Heart left ventricle (tissue), 16 donors: ENCODE measurements at regions of chr2 and their contacts with region 1.

Region 1: GRCh38 chr2:231674587-231675338 is 33.6 kb upstream of the PTMA start:
- DNase-seq: peak; percentile 71 to 86 (median 76)
- ATAC-seq: peak in 3 of 4 donors; percentile 41 to 58 (median 57)
- H3K4me3 ChIP-seq: no peak overlapping the region
- H3K27ac ChIP-seq: peak overlapping the region; percentile 70 to 98 (median 88)
- H3K4me1 ChIP-seq: peaks cover 5 to 58% (median 46%) of the 10 kb centered on the region in 12 donors
- H3K27me3 ChIP-seq: no peaks in the 10 kb centered on the region
- CTCF ChIP-seq: peak; percentile 75 to 95 (median 86)
- POLR2A ChIP-seq: no peak

Region 2: DNA sequence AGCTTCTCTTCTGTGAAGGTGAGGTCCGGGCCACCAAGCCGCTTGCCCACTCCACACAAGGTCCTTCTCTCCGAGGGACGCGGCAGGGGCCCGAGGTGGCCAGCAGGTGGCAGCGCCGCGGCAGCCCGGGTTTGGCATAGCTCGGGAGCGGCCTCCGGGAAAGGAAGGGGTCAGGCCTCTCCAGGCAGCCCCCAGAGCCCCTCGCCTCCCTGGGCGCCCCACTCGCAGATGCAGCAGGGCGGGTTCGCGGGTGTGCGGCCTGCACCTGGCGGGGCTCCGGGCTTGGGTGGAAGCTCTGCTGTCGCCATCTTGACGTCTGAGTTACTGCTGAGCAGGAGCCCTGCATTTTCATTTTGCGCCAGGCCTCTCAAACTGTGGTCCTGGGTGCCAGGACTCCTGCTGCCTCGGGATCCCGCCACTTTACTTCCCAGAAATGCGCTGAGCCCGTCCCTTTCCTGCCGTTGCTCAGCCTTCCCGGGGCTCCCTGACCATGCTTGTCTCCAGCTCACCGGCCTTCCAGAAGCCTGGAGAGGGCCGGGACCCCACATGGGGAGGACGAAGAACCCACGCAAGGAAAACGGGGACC is 191.9 kb before region 1 on chr2:
- intact Hi-C with region 1: no loop called
- DNase-seq: peak; percentile 75 to 91 (median 82)
- ATAC-seq: peak; percentile 75 to 94 (median 90)
- H3K4me3 ChIP-seq: peak overlapping the region; percentile 24 to 74 (median 64)
- H3K27ac ChIP-seq: peak overlapping the region; percentile 45 to 93 (median 86)
- H3K4me1 ChIP-seq: peaks cover 0 to 14% (median 0%) of the 10 kb centered on the region in 12 donors
- H3K27me3 ChIP-seq: no peaks in the 10 kb centered on the region
- CTCF ChIP-seq: peak; percentile 81 to 98 (median 90)
- POLR2A ChIP-seq: peak in 1 of 2 donors; percentile 33

Region 3: GRCh38 chr2:231563378-231563961 is 111.3 kb before region 1 on chr2:
- intact Hi-C with region 1: loop called in 1 of 10 experiments (anchors 5 kb)
- DNase-seq: peak; percentile 38 to 63 (median 50)
- ATAC-seq: peak in 3 of 4 donors; percentile 84 to 85 (median 84)
- H3K4me3 ChIP-seq: no peak overlapping the region
- H3K27ac ChIP-seq: no peak overlapping the region
- H3K4me1 ChIP-seq: no peaks in the 10 kb centered on the region
- H3K27me3 ChIP-seq: no peaks in the 10 kb centered on the region
- CTCF ChIP-seq: peak; percentile 40 to 82 (median 62)
- POLR2A ChIP-seq: no peak

Region 4: GRCh38 chr2:231648587-231649174 is 26.1 kb before region 1 on chr2:
- intact Hi-C with region 1: loop called in 2 of 10 experiments (anchors 1 to 2 kb)
- DNase-seq: peak; percentile 70 to 88 (median 74)
- ATAC-seq: peak; percentile 67 to 82 (median 79)
- H3K4me3 ChIP-seq: no peak overlapping the region
- H3K27ac ChIP-seq: peak overlapping the region in 1 of 12 donors; percentile 33
- H3K4me1 ChIP-seq: peaks cover 1 to 38% (median 16%) of the 10 kb centered on the region in 12 donors
- H3K27me3 ChIP-seq: no peaks in the 10 kb centered on the region
- CTCF ChIP-seq: peak; percentile 51 to 79 (median 65)
- POLR2A ChIP-seq: no peak

Region 5: GRCh38 chr2:231699006-231699405 is 24.2 kb after region 1 on chr2:
- intact Hi-C with region 1: no loop called
- DNase-seq: peak in 4 of 5 donors; percentile 61 to 81 (median 72)
- ATAC-seq: peak; percentile 77 to 93 (median 86)
- H3K4me3 ChIP-seq: no peak overlapping the region
- H3K27ac ChIP-seq: peak overlapping the region in 4 of 12 donors; percentile 15 to 54 (median 45)
- H3K4me1 ChIP-seq: peaks cover 0 to 18% (median 5%) of the 10 kb centered on the region in 12 donors
- H3K27me3 ChIP-seq: no peaks in the 10 kb centered on the region
- CTCF ChIP-seq: no peak
- POLR2A ChIP-seq: no peak

Region 6: DNA sequence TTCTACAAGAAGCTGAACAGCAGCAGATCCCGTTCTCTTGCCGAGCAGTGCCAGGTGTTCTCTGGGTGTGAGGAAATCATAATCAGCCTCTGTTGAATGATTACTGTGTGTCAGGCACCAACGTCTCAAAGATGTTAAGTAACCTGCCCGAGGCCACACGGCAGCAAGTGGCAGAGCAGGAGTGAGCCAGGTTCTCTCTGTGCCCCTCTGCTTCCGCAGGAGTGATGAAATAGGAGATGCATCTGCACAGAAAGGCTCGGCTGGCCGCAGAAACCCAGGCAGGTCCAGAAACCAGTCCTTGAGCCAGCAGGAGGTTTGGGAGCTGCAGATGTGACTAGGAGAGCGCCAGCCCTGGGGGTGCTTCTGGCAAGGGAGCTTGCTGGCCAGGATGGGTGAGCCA is 179.9 kb after region 1 on chr2:
- intact Hi-C with region 1: no loop called
- DNase-seq: no peak
- ATAC-seq: no peak
- H3K4me3 ChIP-seq: no peak overlapping the region
- H3K27ac ChIP-seq: no peak overlapping the region
- H3K4me1 ChIP-seq: no peaks in the 10 kb centered on the region
- H3K27me3 ChIP-seq: peaks cover 0 to 21% (median 0%) of the 10 kb centered on the region in 9 donors
- CTCF ChIP-seq: no peak
- POLR2A ChIP-seq: no peak